Activated naive CD4-positive, alpha-beta T cell treated with anti-CD3 and anti-CD28 coated beads for 36 hours (primary cell): ENCODE measurements at regions of chr17 and their contacts with region 1.

Region 1: GRCh38 chr17:28982131-28982951 is 23.5 kb downstream of the SEZ6 start:
- DNase-seq: peak; percentile 82
- H3K4me3 Mint-ChIP-seq: no peak overlapping the region
- H3K27ac Mint-ChIP-seq: peak overlapping the region; percentile 96
- H3K4me1 Mint-ChIP-seq: peaks cover 22% of the 10 kb centered on the region
- H3K27me3 Mint-ChIP-seq: no peaks in the 10 kb centered on the region

Region 2: GRCh38 chr17:28925912-28926365 is 56.4 kb before region 1 on chr17:
- CTCF ChIA-PET with region 1: no interaction called
- intact Hi-C with region 1: loop called (anchors 1 kb)
- DNase-seq: peak; percentile 58
- H3K4me3 Mint-ChIP-seq: no peak overlapping the region
- H3K27ac Mint-ChIP-seq: peak overlapping the region; percentile 76
- H3K4me1 Mint-ChIP-seq: peaks cover 63% of the 10 kb centered on the region
- H3K27me3 Mint-ChIP-seq: no peaks in the 10 kb centered on the region

Region 3: GRCh38 chr17:29140051-29140621 is 157.8 kb after region 1 on chr17:
- CTCF ChIA-PET with region 1: interaction called, 3 read pairs
- intact Hi-C with region 1: loop called (anchors 1 kb)
- DNase-seq: peak; percentile 89
- H3K4me3 Mint-ChIP-seq: peak overlapping the region; percentile 83
- H3K27ac Mint-ChIP-seq: peak overlapping the region; percentile 93
- H3K4me1 Mint-ChIP-seq: peaks cover 66% of the 10 kb centered on the region
- H3K27me3 Mint-ChIP-seq: no peaks in the 10 kb centered on the region